Activated CD4-positive, alpha-beta T cell treated with anti-CD3 and anti-CD28 coated beads for 36 hours (primary cell): ENCODE measurements at regions of chr2 and their contacts with region 1.

Region 1: GRCh38 chr2:122491011-122491410 is 735.6 kb downstream of the TSN start:
- DNase-seq: no peak
- ATAC-seq: no peak
- H3K4me3 Mint-ChIP-seq: no peak overlapping the region
- H3K27ac Mint-ChIP-seq: no peak overlapping the region
- H3K4me1 Mint-ChIP-seq: no peaks in the 10 kb centered on the region
- H3K27me3 Mint-ChIP-seq: no peaks in the 10 kb centered on the region

Region 2: DNA sequence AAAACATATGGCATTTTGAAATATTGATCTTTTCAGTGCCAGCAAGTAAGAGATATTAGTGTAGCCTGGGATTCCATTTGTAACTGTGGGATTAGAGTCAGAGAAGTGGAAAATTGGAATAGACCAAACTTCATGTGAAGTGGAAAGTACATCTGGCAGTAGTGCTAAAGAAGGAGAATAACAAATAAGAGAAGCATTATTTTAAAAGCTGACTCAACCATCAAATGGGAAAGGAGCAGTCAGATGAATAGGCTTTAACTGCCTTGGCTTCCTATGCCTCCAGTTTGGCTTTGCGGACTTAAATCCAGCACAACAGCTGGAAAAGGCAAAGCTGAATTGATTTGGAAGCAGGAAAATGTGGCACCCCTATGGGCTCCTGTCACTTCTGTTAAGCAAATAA is 112.5 kb before region 1 on chr2:
- CTCF ChIA-PET with region 1: no interaction called
- POLR2A ChIA-PET with region 1: no interaction called
- intact Hi-C with region 1: loop called in 1 of 2 experiments (anchors 1 kb)
- DNase-seq: no peak
- ATAC-seq: no peak
- H3K4me3 Mint-ChIP-seq: no peak overlapping the region
- H3K27ac Mint-ChIP-seq: no peak overlapping the region
- H3K4me1 Mint-ChIP-seq: no peaks in the 10 kb centered on the region
- H3K27me3 Mint-ChIP-seq: no peaks in the 10 kb centered on the region

Region 3: DNA sequence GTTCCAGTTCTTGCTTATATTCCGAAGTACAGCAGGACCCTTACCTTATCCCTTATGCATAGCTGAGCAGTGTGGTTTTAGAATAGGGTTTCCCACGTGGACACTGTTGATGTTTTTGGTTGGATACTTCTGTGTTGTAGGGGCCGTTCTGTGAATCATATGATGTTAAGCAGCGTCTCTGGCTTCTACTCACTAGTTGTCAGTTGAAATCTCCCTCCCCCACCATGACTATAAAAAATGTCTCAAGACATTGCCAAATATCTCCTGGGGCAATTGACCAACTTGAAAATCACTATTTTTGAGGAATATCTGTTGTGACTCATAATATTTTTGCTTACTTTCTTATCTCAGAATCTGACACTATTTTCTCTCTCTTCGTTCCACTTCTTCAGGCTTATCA is 21.9 kb before region 1 on chr2:
- CTCF ChIA-PET with region 1: no interaction called
- POLR2A ChIA-PET with region 1: no interaction called
- intact Hi-C with region 1: no loop called
- DNase-seq: no peak
- ATAC-seq: no peak
- H3K4me3 Mint-ChIP-seq: no peak overlapping the region
- H3K27ac Mint-ChIP-seq: no peak overlapping the region
- H3K4me1 Mint-ChIP-seq: no peaks in the 10 kb centered on the region
- H3K27me3 Mint-ChIP-seq: no peaks in the 10 kb centered on the region